Caco-2 (cell line): ENCODE measurements at regions of chr15 and their contacts with region 1.

Region 1: GRCh38 chr15:39666677-39667076 is 85.8 kb downstream of the THBS1 start:
- DNase-seq: no peak
- H3K4me3 ChIP-seq: no peak overlapping the region
- H3K4me3 Mint-ChIP-seq: no peak overlapping the region
- H3K27ac Mint-ChIP-seq: peak overlapping the region; percentile 48
- H3K4me1 ChIP-seq: peaks cover 22% of the 10 kb centered on the region
- H3K4me1 Mint-ChIP-seq: peaks cover 31% of the 10 kb centered on the region
- H3K27me3 ChIP-seq: no peaks in the 10 kb centered on the region
- H3K27me3 Mint-ChIP-seq: no peaks in the 10 kb centered on the region
- CTCF ChIP-seq: no peak

Region 2: GRCh38 chr15:39920510-39921273 is 254.0 kb after region 1 on chr15:
- CTCF ChIA-PET with region 1: no interaction called
- POLR2A ChIA-PET with region 1: no interaction called
- intact Hi-C with region 1: loop called (anchors 5 kb)
- DNase-seq: peak; percentile 66 to 85
- H3K4me3 ChIP-seq: peak overlapping the region; percentile 88
- H3K4me3 Mint-ChIP-seq: peak overlapping the region; percentile 90
- H3K27ac Mint-ChIP-seq: peak overlapping the region; percentile 80
- H3K4me1 ChIP-seq: peaks cover 23% of the 10 kb centered on the region
- H3K4me1 Mint-ChIP-seq: peaks cover 27% of the 10 kb centered on the region
- H3K27me3 ChIP-seq: no peaks in the 10 kb centered on the region
- H3K27me3 Mint-ChIP-seq: no peaks in the 10 kb centered on the region
- CTCF ChIP-seq: no peak